ENCODE measurements at regions of chr4 and their contacts with region 1.

Region 1: GRCh38 chr4:183987987-183988392 is 82.9 kb downstream of the STOX2 start:
- DNase-seq: peak; percentile 67 to 88 (median 82)
- ATAC-seq: peak; percentile 90 to 94 (median 92)
- H3K4me3 ChIP-seq: peak overlapping the region; percentile 12 to 56 (median 48)
- H3K27ac ChIP-seq: peak overlapping the region; percentile 63 to 94 (median 86)
- H3K4me1 ChIP-seq: peaks cover 0 to 72% (median 22%) of the 10 kb centered on the region in 12 donors
- H3K27me3 ChIP-seq: no peaks in the 10 kb centered on the region
- CTCF ChIP-seq: no peak
- POLR2A ChIP-seq: peak in 1 of 2 donors; percentile 73

Region 2: DNA sequence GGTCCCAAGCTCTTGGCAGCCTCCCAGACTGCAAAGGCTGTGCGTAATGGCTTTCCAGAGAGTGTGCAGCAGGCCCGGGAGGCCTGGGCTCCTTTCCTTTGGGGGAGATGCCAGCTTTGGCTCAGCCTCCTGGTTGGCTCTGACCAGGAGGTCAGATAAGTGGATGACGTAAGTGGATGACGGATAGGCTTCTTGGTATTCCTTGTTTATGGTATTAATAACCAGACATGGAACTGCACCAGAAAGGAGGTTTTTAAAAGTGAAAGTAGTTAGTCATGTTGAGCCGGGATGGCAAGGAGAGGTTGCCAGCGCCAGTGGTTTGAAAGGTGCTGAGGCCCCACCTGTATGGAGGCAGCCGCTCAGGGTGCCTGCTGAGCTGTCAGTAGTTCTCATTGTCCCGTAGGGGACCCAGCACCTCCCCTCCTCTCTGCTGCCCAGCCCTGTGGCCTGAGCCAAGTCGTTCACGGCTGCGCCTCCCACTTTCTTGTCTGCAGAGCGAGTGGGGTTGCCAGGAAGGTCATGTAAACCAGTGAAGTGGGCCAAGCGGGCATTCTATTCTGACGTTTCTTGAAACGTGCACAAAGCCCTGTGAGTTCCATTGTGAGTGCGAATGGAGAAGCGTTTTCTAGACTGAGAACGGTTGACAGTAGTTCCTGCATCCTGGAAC is 111.6 kb before region 1 on chr4:
- intact Hi-C with region 1: loop called in 1 of 10 experiments (anchors 10 kb)
- DNase-seq: peak; percentile 86 to 96 (median 89)
- ATAC-seq: peak; percentile 94 to 96 (median 94)
- H3K4me3 ChIP-seq: peak overlapping the region in 11 of 12 donors; percentile 14 to 65 (median 47)
- H3K27ac ChIP-seq: peak overlapping the region; percentile 68 to 95 (median 85)
- H3K4me1 ChIP-seq: peaks cover 0 to 29% (median 13%) of the 10 kb centered on the region in 12 donors
- H3K27me3 ChIP-seq: no peaks in the 10 kb centered on the region
- CTCF ChIP-seq: no peak
- POLR2A ChIP-seq: peak in 1 of 2 donors; percentile 19

Region 3: GRCh38 chr4:183961795-183962194 is 26.2 kb before region 1 on chr4:
- intact Hi-C with region 1: loop called in 1 of 10 experiments (anchors 1 kb)
- DNase-seq: no peak
- ATAC-seq: no peak
- H3K4me3 ChIP-seq: no peak overlapping the region
- H3K27ac ChIP-seq: peak overlapping the region in 10 of 12 donors; percentile 50 to 76 (median 64)
- H3K4me1 ChIP-seq: peaks cover 0 to 39% (median 17%) of the 10 kb centered on the region in 12 donors
- H3K27me3 ChIP-seq: no peaks in the 10 kb centered on the region
- CTCF ChIP-seq: no peak
- POLR2A ChIP-seq: no peak

Measured in heart left ventricle (tissue), 16 donors.